Tibial artery (tissue), 4 donors: ENCODE measurements at regions of chr6 and their contacts with region 1.

Region 1: GRCh38 chr6:44265007-44265721 is at the start of gene NFKBIE:
- DNase-seq: peak; percentile 95 to 97
- H3K4me3 ChIP-seq: peak within 1 kb of the TSS; percentile 64 to 72
- H3K27ac ChIP-seq: peak within 1 kb of the TSS; percentile 68 to 82
- H3K4me1 ChIP-seq: peaks cover 0 to 40% (median 27%) of the 10 kb centered on the region in 4 donors
- H3K27me3 ChIP-seq: peaks cover 0 to 22% of the 10 kb centered on the region in 2 donors
- CTCF ChIP-seq: peak in 1 of 2 experiments; percentile 3

Region 2: GRCh38 chr6:42996513-42996912 is 1268.7 kb before region 1 on chr6:
- intact Hi-C with region 1: no loop called
- DNase-seq: no peak
- H3K4me3 ChIP-seq: no peak overlapping the region
- H3K27ac ChIP-seq: no peak overlapping the region
- H3K4me1 ChIP-seq: no peaks in the 10 kb centered on the region
- H3K27me3 ChIP-seq: no peaks in the 10 kb centered on the region
- CTCF ChIP-seq: no peak

Region 3: DNA sequence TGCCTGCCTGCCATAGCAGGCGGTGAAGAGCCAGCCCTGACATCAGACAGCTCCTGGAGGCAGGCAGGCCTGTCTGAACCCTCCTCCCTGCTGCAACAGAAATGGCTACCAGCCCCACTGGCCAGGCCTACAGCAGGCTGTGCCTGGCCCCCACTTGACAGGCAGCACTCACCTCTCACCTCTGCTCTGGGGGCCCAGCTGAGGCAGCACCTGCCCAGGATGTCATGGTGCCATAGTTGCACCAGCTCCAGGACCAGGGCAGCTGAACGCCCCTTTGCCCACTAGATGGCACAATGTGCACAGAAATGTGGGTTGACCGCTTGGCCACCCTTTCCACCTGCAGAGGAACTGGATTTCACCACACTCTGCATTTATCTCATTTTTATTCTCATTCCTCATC is 168.6 kb before region 1 on chr6:
- intact Hi-C with region 1: loop called (anchors 10 kb)
- DNase-seq: peak; percentile 74 to 80
- H3K4me3 ChIP-seq: no peak overlapping the region
- H3K27ac ChIP-seq: no peak overlapping the region
- H3K4me1 ChIP-seq: no peaks in the 10 kb centered on the region
- H3K27me3 ChIP-seq: no peaks in the 10 kb centered on the region
- CTCF ChIP-seq: peak; percentile 81

Region 4: GRCh38 chr6:44221291-44221960 is 43.7 kb before region 1 on chr6:
- intact Hi-C with region 1: no loop called
- DNase-seq: peak; percentile 95 to 98
- H3K4me3 ChIP-seq: peak overlapping the region; percentile 62 to 63
- H3K27ac ChIP-seq: peak overlapping the region; percentile 97 to 99
- H3K4me1 ChIP-seq: peaks cover 0 to 91% (median 77%) of the 10 kb centered on the region in 4 donors
- H3K27me3 ChIP-seq: no peaks in the 10 kb centered on the region
- CTCF ChIP-seq: peak; percentile 81 to 95

Region 5: DNA sequence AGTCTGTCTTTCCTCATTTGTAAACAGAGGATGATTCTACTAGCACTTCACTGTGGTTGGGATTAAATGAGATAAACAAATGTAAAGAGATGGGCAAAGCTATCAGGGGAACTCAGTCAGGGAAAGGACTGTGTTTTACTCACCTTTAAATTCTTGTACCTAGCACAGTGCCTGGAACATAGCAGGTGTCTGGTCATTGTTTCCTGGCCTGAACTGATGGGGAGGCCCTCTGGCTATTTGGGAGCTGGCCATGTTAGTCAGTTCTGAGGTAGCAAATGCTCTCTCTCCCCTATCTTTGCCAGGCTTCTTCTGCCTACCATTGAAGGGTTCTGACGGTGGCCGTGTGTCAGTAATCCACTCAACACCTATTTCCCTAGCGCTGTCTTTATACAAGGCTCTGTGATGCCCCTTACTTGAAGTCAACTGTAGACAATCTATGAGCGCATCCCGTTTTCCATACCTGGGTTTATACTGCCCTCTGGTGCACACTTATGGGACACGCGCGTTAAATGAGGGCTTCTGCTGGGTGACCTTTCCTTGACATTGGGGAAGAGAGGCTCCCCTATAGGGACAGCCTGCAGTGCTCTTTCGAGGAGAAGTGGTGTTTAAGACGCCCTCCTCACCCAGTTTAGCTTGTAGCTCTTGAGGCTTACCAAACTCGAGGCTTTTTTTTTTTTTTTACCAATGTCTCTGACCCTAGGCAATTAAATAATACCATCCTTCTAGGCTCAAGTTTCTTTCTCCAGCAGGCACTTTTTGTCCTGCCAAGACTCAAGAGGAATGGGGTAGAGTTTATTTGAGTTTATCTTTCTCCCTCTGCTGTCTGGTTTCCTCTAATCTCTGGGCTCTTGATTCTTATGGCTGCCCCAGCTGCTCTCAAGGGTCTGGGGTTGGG is 73.3 kb after region 1 on chr6:
- intact Hi-C with region 1: loop called (anchors 5 kb)
- DNase-seq: peak; percentile 67 to 69
- H3K4me3 ChIP-seq: no peak overlapping the region
- H3K27ac ChIP-seq: no peak overlapping the region
- H3K4me1 ChIP-seq: peaks cover 0 to 23% (median 7%) of the 10 kb centered on the region in 4 donors
- H3K27me3 ChIP-seq: peaks cover 0 to 51% of the 10 kb centered on the region in 2 donors
- CTCF ChIP-seq: peak; percentile 62 to 66

Region 6: DNA sequence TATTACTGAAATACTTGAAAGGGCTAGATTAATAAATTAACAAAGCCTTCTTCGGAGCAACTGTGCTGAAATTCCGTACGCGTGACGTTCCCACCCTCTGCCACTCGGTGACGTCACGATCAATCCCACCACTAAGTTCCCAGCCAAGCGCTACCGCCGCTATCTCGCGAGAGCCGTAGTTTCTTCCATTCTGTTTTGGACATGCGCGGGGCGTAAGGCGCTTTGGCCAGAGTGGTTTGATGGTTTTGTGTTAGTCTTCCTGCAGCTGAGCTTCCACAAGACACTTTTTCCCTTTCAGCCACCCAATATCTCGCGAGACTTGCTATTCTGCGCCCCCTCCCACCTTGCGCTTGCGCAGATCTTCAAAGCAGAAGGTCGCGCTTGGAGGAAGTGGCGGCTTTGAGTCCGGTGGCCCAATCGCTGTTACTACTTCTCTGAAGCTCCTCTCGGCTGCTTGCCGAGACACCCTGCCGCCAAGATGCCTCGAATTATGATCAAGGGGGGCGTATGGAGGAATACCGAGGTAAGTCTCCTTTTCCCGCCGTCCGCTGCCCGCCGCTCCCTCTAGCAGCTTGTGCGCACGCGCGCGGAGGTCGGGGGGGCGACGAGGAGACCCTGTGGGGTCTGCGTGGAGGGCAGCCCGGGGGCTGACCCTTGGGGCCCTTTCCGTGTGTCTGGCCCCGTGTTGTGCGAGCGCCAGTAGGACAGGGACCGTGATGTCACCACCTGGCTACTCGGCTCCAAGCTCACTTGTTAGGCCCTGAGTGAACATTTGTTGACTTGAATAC is 122.4 kb after region 1 on chr6 and contains the start of gene CDC5L:
- intact Hi-C with region 1: loop called (anchors 5 kb)
- DNase-seq: peak; percentile 96 to 98
- H3K4me3 ChIP-seq: peak within 1 kb of the TSS; percentile 68 to 94
- H3K27ac ChIP-seq: peak within 1 kb of the TSS; percentile 95 to 98
- H3K4me1 ChIP-seq: peaks cover 4 to 46% (median 17%) of the 10 kb centered on the region in 4 donors
- H3K27me3 ChIP-seq: no peaks in the 10 kb centered on the region
- CTCF ChIP-seq: no peak

Region 7: DNA sequence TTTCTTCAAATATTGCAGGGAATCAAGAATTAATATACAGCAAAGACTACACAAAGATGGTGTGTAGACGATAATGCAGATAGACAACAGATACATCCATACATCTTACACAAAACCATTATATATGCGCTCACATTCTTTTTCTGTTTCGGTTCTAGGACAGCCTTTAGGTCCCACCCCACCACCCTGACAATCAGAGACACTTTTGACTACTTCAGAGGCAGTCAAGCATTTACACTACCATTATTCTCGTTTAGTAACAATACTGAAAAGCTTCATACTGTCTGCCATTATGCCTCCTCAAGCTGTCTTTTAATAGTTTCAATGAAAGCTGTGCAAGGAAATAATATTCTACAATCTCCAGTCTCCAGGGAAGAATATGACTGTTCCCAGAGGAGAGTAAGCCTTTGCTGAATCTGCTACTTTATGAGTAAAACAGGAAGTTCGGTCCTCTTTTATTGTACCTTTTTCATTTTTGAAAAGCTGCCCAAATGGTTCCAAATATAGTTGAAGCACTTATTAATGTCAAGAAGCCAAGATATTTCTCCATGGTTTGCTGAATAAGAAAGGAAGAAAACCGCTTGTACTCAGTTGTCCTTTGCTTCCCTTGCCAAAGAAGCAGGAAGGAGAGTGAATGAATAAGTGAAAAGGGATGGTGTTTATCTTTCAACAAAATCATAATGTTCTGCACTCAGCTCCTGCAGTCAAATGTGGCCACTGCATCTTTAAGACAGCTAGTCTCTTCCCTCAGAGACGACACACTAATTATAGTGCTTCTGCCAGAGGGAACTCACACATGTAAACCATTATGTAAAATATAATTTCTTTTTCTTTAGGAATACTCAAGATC is 590.6 kb after region 1 on chr6:
- intact Hi-C with region 1: no loop called
- DNase-seq: no peak
- H3K4me3 ChIP-seq: no peak overlapping the region
- H3K27ac ChIP-seq: no peak overlapping the region
- H3K4me1 ChIP-seq: peaks cover 0 to 17% (median 3%) of the 10 kb centered on the region in 4 donors
- H3K27me3 ChIP-seq: no peaks in the 10 kb centered on the region
- CTCF ChIP-seq: no peak